GM13976 (cell line): ENCODE measurements at regions of chr15 and their contacts with region 1.

Region 1: DNA sequence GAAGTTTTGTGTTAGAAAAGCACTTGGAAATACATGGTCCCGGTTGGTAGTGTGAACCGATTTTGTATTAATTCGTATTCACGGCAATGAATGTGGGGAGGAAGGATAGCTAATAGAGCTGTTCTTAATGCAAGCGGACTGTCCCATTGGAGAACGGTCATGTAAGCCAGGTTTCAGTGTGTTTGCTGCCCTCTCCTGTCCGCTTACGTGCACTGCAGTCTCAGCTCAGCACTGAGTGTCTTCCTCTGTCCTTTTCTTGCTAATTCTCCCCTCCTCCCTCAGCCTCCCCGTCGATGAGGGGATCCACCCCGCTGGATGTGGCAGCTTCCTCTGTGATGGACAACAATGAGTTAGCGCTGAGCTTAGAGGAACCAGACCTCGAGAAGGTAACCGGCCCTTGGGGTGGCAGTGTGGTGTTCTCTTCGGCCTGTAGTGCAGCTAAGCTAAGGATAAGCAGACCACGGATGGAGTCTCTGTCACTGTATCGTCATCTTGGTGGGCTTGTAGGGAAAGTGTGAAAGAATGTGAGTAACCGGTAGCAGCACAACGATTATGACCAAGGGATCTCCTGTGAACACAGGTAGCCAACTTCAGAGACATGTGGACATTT is 267.5 kb upstream of the CHRM5 start:
- DNase-seq: peak; percentile 55
- CTCF ChIP-seq: peak; percentile 87

Region 2: DNA sequence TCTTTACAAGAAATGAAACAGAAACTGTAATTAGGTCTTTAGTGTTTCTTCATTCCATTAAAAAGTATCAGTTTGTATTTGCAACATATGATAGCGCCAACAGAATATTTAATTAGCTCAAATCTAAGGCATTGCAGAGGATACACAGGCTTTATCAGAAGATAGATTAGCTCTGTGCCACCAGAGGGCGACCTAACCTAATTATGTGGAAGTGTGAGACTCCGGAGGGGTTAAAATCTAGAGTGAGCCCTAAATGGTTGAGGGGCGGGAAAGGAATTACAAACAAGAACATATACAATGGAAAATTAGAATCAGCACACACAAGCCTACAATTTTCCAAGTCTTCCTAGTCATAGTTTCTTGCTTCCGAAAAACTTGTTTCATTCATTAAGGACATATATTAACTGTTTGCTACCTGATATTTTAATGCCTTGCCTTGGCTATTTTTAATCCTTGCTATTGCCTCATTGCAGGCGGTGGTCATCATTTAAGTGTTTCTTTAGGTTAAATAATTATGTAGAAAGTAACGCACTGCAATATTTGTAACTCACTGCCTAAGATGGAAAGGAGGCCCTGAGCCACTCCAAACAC is 408.0 kb before region 1 on chr15:
- in situ Hi-C with region 1: loop called (anchors 10 kb)
- DNase-seq: peak; percentile 52
- CTCF ChIP-seq: peak; percentile 46

Region 3: DNA sequence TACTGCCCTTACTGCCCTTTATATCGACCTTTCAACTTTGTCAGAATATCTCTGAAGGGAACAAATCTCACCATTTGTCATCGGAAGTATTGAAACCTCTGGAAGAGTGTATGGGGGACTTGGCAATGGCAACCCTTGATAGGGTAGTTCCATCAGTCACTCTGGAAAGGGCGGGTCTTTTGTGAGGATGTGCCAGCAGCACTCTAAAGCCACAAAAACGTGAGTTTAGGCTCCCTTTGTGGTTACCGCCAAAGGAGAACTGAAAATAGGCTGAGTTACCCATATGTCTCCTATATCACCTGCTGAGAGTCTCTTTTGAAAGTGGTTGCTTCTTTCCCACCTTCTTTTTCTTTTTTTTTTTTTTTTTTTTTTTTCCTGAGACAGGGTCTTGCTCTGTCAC is 29.3 kb before region 1 on chr15:
- in situ Hi-C with region 1: no loop called
- DNase-seq: no peak
- CTCF ChIP-seq: no peak

Region 4: GRCh38 chr15:33882921-33883320 is 182.1 kb after region 1 on chr15:
- in situ Hi-C with region 1: no loop called
- DNase-seq: no peak
- CTCF ChIP-seq: no peak